Activated CD4-positive, alpha-beta memory T cell treated with anti-CD3 and anti-CD28 coated beads for 36 hours (primary cell): ENCODE measurements at regions of chr1 and their contacts with region 1.

Region 1: GRCh38 chr1:95116580-95117206 is 462 bp upstream of the TLCD4 start:
- DNase-seq: peak; percentile 62
- H3K4me3 Mint-ChIP-seq: peak overlapping the region; percentile 78
- H3K27ac Mint-ChIP-seq: no peak overlapping the region
- H3K4me1 Mint-ChIP-seq: peaks cover 6% of the 10 kb centered on the region
- H3K27me3 Mint-ChIP-seq: peaks cover 20% of the 10 kb centered on the region

Region 2: GRCh38 chr1:94854458-94855306 is 262.0 kb before region 1 on chr1:
- CTCF ChIA-PET with region 1: interaction called, 5 read pairs
- POLR2A ChIA-PET with region 1: no interaction called
- intact Hi-C with region 1: loop called (anchors 2 kb)
- DNase-seq: peak; percentile 86
- H3K4me3 Mint-ChIP-seq: no peak overlapping the region
- H3K27ac Mint-ChIP-seq: no peak overlapping the region
- H3K4me1 Mint-ChIP-seq: no peaks in the 10 kb centered on the region
- H3K27me3 Mint-ChIP-seq: peaks cover 1% of the 10 kb centered on the region

Region 3: DNA sequence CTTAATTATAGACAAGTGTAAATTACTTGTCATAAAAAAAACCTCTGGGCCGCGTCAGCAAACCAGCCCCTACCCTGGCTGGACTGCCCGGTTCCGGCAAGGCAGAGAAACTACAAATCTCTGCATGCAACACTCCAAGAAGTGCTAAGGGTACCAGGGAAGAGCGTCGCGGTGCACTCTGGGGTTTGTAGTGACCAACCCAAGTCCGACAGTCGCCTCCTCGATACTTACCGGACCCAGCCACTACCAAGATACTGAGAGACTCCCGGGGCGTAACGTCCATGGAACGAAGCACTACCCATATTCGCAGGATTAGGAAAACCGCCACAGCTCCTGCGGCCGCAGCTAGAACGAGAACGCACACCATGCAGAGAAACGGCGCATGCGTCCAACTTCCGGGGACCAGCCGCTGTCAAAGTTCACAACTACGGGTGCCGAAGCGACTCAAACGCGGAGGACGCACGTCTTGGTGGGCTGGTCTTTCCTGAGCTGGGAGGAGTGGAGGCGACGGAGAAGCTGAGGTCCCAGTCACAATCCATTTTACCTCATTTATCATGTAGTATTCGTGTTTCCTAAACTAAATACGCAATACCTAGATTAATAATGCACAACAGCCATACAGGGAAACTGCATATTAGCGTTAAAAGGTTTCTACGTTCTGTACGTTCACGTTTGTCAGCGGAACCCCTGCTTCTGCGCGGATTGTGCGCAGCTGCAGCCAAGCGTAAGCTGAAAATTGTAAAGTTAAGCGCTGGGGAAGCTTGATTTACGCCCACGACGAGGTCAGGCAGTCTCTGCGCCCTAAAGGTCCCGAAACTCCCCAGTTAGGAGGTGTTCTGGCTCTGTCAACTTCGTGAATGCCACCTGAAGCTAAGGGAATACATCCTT is 43.9 kb before region 1 on chr1 and contains the start of gene ALG14:
- CTCF ChIA-PET with region 1: interaction called, 3 read pairs
- POLR2A ChIA-PET with region 1: no interaction called
- intact Hi-C with region 1: loop called (anchors 1 kb)
- DNase-seq: peak; percentile 95
- H3K4me3 Mint-ChIP-seq: peak within 1 kb of the TSS; percentile 90
- H3K27ac Mint-ChIP-seq: peak within 1 kb of the TSS; percentile 92
- H3K4me1 Mint-ChIP-seq: peaks cover 14% of the 10 kb centered on the region
- H3K27me3 Mint-ChIP-seq: no peaks in the 10 kb centered on the region
- total RNA-seq, gene ALG14: 4.3 to 4.4 TPM

Region 4: GRCh38 chr1:95084317-95085176 is 32.1 kb before region 1 on chr1:
- CTCF ChIA-PET with region 1: interaction called, 15 read pairs
- POLR2A ChIA-PET with region 1: no interaction called
- intact Hi-C with region 1: no loop called
- DNase-seq: peak; percentile 15
- H3K4me3 Mint-ChIP-seq: no peak overlapping the region
- H3K27ac Mint-ChIP-seq: no peak overlapping the region
- H3K4me1 Mint-ChIP-seq: no peaks in the 10 kb centered on the region
- H3K27me3 Mint-ChIP-seq: peaks cover 6% of the 10 kb centered on the region